Caco-2 (cell line): ENCODE measurements at regions of chr14 and their contacts with region 1.

Region 1: GRCh38 chr14:99729991-99730868 is 46.1 kb downstream of the CYP46A1 start:
- DNase-seq: peak; percentile 92 to 94
- H3K4me3 ChIP-seq: peak overlapping the region; percentile 63
- H3K4me3 Mint-ChIP-seq: peak overlapping the region; percentile 72
- H3K27ac Mint-ChIP-seq: peak overlapping the region; percentile 53
- H3K4me1 ChIP-seq: peaks cover 10% of the 10 kb centered on the region
- H3K4me1 Mint-ChIP-seq: no peaks in the 10 kb centered on the region
- H3K27me3 ChIP-seq: no peaks in the 10 kb centered on the region
- H3K27me3 Mint-ChIP-seq: no peaks in the 10 kb centered on the region
- CTCF ChIP-seq: peak; percentile 78 to 92

Region 2: GRCh38 chr14:99683619-99684355 is 46.4 kb before region 1 on chr14 and contains the start of gene CYP46A1:
- CTCF ChIA-PET with region 1: interaction called, 12 read pairs
- POLR2A ChIA-PET with region 1: interaction called, 3 read pairs
- intact Hi-C with region 1: no loop called
- DNase-seq: peak; percentile 99
- H3K4me3 ChIP-seq: peak within 1 kb of the TSS; percentile 57
- H3K4me3 Mint-ChIP-seq: peak within 1 kb of the TSS; percentile 76
- H3K27ac Mint-ChIP-seq: no peak within 1 kb of the TSS
- H3K4me1 ChIP-seq: peaks cover 9% of the 10 kb centered on the region; the same call in 1 of the 2 replicates
- H3K4me1 Mint-ChIP-seq: peaks cover 7% of the 10 kb centered on the region
- H3K27me3 ChIP-seq: no peaks in the 10 kb centered on the region
- H3K27me3 Mint-ChIP-seq: peaks cover 24% of the 10 kb centered on the region
- CTCF ChIP-seq: no peak
- total RNA-seq, gene CYP46A1: 0.05 and 0.09 TPM in 2 replicates

Region 3: DNA sequence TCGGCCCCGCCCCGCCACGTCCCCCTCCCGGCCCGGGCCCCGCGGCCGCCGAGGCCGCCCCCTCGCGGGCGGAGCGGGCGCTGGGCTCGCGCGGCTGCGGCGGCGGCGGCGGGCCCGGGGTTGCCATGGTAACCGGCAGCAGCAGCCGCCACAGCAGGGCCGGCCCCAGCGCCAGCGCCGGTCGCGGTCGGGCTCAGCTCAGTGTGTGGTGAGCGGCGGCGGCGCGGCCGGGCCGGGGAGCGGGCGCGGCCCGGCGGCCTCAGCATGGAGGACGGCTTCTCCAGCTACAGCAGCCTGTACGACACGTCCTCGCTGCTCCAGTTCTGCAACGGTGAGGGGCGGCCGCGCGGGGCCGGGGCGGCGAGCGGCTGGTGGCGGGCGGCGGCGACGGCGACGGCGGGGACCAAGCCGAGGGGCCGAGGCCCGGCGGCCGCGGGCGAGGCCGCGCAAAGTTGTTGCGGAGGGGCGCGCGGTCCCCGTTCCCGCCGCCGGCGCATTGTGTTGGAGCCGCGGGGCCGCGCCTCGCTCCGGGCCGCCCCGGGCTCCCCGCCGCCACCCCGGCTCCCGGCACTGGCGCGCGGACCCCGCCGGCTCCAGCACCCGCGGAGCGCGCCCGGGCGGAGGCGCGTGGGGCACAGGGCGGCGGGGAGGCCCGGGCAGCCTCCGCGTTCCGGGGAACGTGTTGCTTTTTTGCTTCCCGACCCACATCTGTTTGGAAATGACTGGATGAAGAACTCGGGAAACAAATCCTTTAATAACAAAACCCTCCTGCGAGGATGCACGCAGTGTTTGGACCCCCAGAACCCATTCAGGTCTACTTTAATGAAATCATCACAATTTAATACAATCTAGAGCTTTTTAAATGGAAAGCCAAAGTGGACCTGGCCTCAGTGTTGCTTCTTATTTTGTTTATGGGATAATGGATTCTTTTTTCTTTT is 63.3 kb after region 1 on chr14 and contains the start of gene EML1:
- CTCF ChIA-PET with region 1: interaction called, 7 read pairs
- POLR2A ChIA-PET with region 1: interaction called, 4 read pairs
- intact Hi-C with region 1: loop called (anchors 1 kb)
- DNase-seq: peak; percentile 75 to 91
- H3K4me3 ChIP-seq: peak within 1 kb of the TSS; percentile 44
- H3K4me3 Mint-ChIP-seq: peak within 1 kb of the TSS; percentile 64
- H3K27ac Mint-ChIP-seq: peak within 1 kb of the TSS; percentile 57
- H3K4me1 ChIP-seq: no peaks in the 10 kb centered on the region
- H3K4me1 Mint-ChIP-seq: peaks cover 14% of the 10 kb centered on the region
- H3K27me3 ChIP-seq: no peaks in the 10 kb centered on the region
- H3K27me3 Mint-ChIP-seq: no peaks in the 10 kb centered on the region
- CTCF ChIP-seq: no peak
- total RNA-seq, gene EML1: 5.9 and 7.2 TPM in 2 replicates

Region 4: GRCh38 chr14:99850709-99851108 is 120.5 kb after region 1 on chr14:
- CTCF ChIA-PET with region 1: no interaction called
- POLR2A ChIA-PET with region 1: no interaction called
- intact Hi-C with region 1: no loop called
- DNase-seq: no peak
- H3K4me3 ChIP-seq: no peak overlapping the region
- H3K4me3 Mint-ChIP-seq: no peak overlapping the region
- H3K27ac Mint-ChIP-seq: no peak overlapping the region
- H3K4me1 ChIP-seq: no peaks in the 10 kb centered on the region
- H3K4me1 Mint-ChIP-seq: no peaks in the 10 kb centered on the region
- H3K27me3 ChIP-seq: no peaks in the 10 kb centered on the region
- H3K27me3 Mint-ChIP-seq: no peaks in the 10 kb centered on the region
- CTCF ChIP-seq: no peak

Region 5: GRCh38 chr14:99884834-99885648 is 154.8 kb after region 1 on chr14:
- CTCF ChIA-PET with region 1: interaction called, 3 read pairs
- POLR2A ChIA-PET with region 1: no interaction called
- intact Hi-C with region 1: loop called (anchors 1 kb)
- DNase-seq: peak in 1 of 2 experiments; percentile 64
- H3K4me3 ChIP-seq: no peak overlapping the region
- H3K4me3 Mint-ChIP-seq: no peak overlapping the region
- H3K27ac Mint-ChIP-seq: no peak overlapping the region
- H3K4me1 ChIP-seq: no peaks in the 10 kb centered on the region
- H3K4me1 Mint-ChIP-seq: no peaks in the 10 kb centered on the region
- H3K27me3 ChIP-seq: no peaks in the 10 kb centered on the region
- H3K27me3 Mint-ChIP-seq: no peaks in the 10 kb centered on the region
- CTCF ChIP-seq: peak; percentile 66 to 74